Heart right ventricle (tissue), 16 donors: ENCODE measurements at regions of chr4 and their contacts with region 1.

Region 1: GRCh38 chr4:185039508-185040273 is 21.4 kb downstream of the HELT start:
- DNase-seq: peak in 1 of 2 donors; percentile 59
- ATAC-seq: peak in 7 of 8 donors; percentile 46 to 86 (median 75)
- H3K4me3 ChIP-seq: peak overlapping the region in 2 of 10 donors; percentile 7 to 24
- H3K27ac ChIP-seq: no peak overlapping the region
- H3K4me1 ChIP-seq: peaks cover 0 to 11% (median 6%) of the 10 kb centered on the region in 9 donors
- H3K27me3 ChIP-seq: peaks cover 0 to 2% (median 0%) of the 10 kb centered on the region in 7 donors
- CTCF ChIP-seq: peak; percentile 62 to 89 (median 81)

Region 2: DNA sequence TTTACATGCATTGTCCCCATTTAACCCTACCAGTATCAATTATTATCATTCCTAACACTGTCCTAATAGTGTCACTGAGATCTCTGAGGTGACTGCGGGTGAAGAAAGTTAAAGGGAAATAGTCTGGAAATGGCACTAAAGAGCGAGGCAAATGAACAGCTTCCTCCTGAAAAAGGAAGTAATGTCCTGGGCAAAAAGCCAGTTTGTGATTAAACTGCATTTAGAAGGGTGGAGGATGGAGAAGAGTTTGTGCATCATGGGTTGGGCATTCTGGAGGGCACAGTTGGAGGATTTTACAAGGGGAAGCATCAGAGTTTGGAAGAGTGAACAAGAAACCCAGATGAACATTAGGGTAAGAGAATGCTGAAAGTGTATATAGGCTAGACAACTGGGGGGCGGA is 42.9 kb after region 1 on chr4:
- intact Hi-C with region 1: loop called in 1 of 10 experiments (anchors 5 kb)
- DNase-seq: no peak
- ATAC-seq: no peak
- H3K4me3 ChIP-seq: no peak overlapping the region
- H3K27ac ChIP-seq: no peak overlapping the region
- H3K4me1 ChIP-seq: no peaks in the 10 kb centered on the region
- H3K27me3 ChIP-seq: peaks cover 0 to 8% (median 0%) of the 10 kb centered on the region in 7 donors
- CTCF ChIP-seq: no peak

Region 3: GRCh38 chr4:185096032-185096653 is 56.5 kb after region 1 on chr4:
- intact Hi-C with region 1: loop called in 8 of 10 experiments (anchors 1 to 10 kb)
- DNase-seq: peak in 1 of 2 donors; percentile 63
- ATAC-seq: peak in 2 of 8 donors; percentile 34 to 41
- H3K4me3 ChIP-seq: no peak overlapping the region
- H3K27ac ChIP-seq: no peak overlapping the region
- H3K4me1 ChIP-seq: no peaks in the 10 kb centered on the region
- H3K27me3 ChIP-seq: no peaks in the 10 kb centered on the region
- CTCF ChIP-seq: peak; percentile 15 to 83 (median 61)

Region 4: DNA sequence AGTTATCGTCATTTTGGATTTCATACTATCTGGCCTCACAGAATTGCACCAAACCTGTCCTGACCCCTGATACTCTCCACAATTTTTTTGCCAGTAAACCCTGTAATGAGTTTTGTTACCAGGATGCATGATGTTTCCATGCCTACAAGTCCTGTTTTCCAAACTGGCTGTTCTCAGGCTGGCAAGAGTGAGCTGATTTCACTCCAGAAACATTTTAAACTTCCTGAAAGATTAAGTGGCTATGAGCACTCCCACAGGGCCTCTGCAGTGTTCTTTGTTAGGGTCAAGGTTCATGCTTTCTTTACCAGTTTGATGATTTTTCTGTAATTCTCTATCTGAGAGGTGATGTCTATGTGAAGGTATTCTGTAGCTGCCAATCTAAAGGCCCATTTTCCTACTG is 527.3 kb after region 1 on chr4:
- intact Hi-C with region 1: no loop called
- DNase-seq: peak in 1 of 2 donors; percentile 78
- ATAC-seq: peak; percentile 72 to 88 (median 81)
- H3K4me3 ChIP-seq: peak overlapping the region in 1 of 10 donors; percentile 5
- H3K27ac ChIP-seq: peak overlapping the region; percentile 73 to 95 (median 90)
- H3K4me1 ChIP-seq: peaks cover 10 to 47% (median 26%) of the 10 kb centered on the region in 9 donors
- H3K27me3 ChIP-seq: no peaks in the 10 kb centered on the region
- CTCF ChIP-seq: no peak